ENCODE measurements at regions of chr12 and their contacts with region 1.

Region 1: GRCh38 chr12:11486623-11487444 is 91.5 kb upstream of the PRB2 start:
- DNase-seq: peak; percentile 41
- ATAC-seq: peak; percentile 96
- H3K4me3 Mint-ChIP-seq: no peak overlapping the region
- H3K27ac Mint-ChIP-seq: no peak overlapping the region
- H3K4me1 Mint-ChIP-seq: peaks cover 4% of the 10 kb centered on the region
- H3K27me3 Mint-ChIP-seq: peaks cover 21% of the 10 kb centered on the region
- CTCF ChIP-seq: peak; percentile 94

Region 2: GRCh38 chr12:10153271-10154144 is 1333.3 kb before region 1 on chr12:
- CTCF ChIA-PET with region 1: interaction called, 3 read pairs
- POLR2A ChIA-PET with region 1: no interaction called
- intact Hi-C with region 1: loop called (anchors 5 kb)
- DNase-seq: peak; percentile 39
- ATAC-seq: peak; percentile 80
- H3K4me3 Mint-ChIP-seq: peak overlapping the region; percentile 86
- H3K27ac Mint-ChIP-seq: no peak overlapping the region
- H3K4me1 Mint-ChIP-seq: peaks cover 16% of the 10 kb centered on the region
- H3K27me3 Mint-ChIP-seq: peaks cover 17% of the 10 kb centered on the region
- CTCF ChIP-seq: peak; percentile 71

Region 3: GRCh38 chr12:10562306-10562933 is 924.4 kb before region 1 on chr12:
- CTCF ChIA-PET with region 1: no interaction called
- POLR2A ChIA-PET with region 1: no interaction called
- intact Hi-C with region 1: loop called (anchors 5 kb)
- DNase-seq: no peak
- ATAC-seq: no peak
- H3K4me3 Mint-ChIP-seq: no peak overlapping the region
- H3K27ac Mint-ChIP-seq: no peak overlapping the region
- H3K4me1 Mint-ChIP-seq: no peaks in the 10 kb centered on the region
- H3K27me3 Mint-ChIP-seq: peaks cover 11% of the 10 kb centered on the region
- CTCF ChIP-seq: peak; percentile 87

Region 4: GRCh38 chr12:10771132-10771733 is 715.6 kb before region 1 on chr12:
- CTCF ChIA-PET with region 1: interaction called, 83 read pairs
- POLR2A ChIA-PET with region 1: no interaction called
- intact Hi-C with region 1: loop called (anchors 1 kb)
- DNase-seq: no peak
- ATAC-seq: peak; percentile 54
- H3K4me3 Mint-ChIP-seq: no peak overlapping the region
- H3K27ac Mint-ChIP-seq: no peak overlapping the region
- H3K4me1 Mint-ChIP-seq: no peaks in the 10 kb centered on the region
- H3K27me3 Mint-ChIP-seq: peaks cover 17% of the 10 kb centered on the region
- CTCF ChIP-seq: no peak

Region 5: DNA sequence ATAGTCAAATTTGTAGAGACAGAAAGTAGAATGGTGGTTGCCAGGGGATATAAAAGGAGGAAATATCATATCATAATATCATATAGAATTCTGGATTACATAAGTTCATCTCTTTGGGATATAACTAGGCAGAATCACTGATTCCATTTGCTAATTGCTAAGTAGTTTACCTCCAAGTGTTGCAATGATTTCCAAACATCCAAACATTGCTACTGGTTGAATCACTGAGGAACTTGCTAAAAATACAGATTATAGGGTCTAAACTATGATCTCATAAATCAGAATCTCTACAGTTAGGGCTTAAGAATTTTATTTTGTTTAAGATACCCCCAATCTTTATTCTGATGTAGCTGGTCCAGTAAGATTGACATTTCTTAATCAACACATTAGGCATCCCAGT is 284.0 kb before region 1 on chr12:
- CTCF ChIA-PET with region 1: no interaction called
- POLR2A ChIA-PET with region 1: no interaction called
- intact Hi-C with region 1: loop called (anchors 2 kb)
- DNase-seq: no peak
- ATAC-seq: no peak
- H3K4me3 Mint-ChIP-seq: no peak overlapping the region
- H3K27ac Mint-ChIP-seq: no peak overlapping the region
- H3K4me1 Mint-ChIP-seq: no peaks in the 10 kb centered on the region
- H3K27me3 Mint-ChIP-seq: no peaks in the 10 kb centered on the region
- CTCF ChIP-seq: no peak

Region 6: DNA sequence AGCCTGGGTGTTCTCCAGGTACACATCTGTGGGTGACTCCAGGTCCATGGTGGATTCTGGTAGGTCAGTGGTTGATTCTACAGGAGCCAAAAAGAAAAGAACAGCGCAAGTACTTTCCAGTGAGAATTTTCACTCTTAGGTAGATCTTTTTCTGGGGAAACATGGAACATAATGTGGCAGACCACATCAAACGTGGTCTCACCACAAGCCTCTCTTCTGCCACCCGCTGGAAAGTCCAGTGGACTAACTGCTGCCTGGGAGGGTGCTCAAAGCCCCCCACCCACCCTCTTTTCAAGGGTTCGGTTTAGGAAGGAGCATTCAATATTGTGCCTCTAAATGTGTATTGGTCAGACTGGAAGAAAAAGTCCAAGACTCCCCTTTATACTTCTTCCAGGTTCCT is 55.3 kb before region 1 on chr12:
- CTCF ChIA-PET with region 1: no interaction called
- POLR2A ChIA-PET with region 1: no interaction called
- intact Hi-C with region 1: no loop called
- DNase-seq: no peak
- ATAC-seq: no peak
- H3K4me3 Mint-ChIP-seq: no peak overlapping the region
- H3K27ac Mint-ChIP-seq: no peak overlapping the region
- H3K4me1 Mint-ChIP-seq: no peaks in the 10 kb centered on the region
- H3K27me3 Mint-ChIP-seq: peaks cover 2% of the 10 kb centered on the region
- CTCF ChIP-seq: no peak

Region 7: DNA sequence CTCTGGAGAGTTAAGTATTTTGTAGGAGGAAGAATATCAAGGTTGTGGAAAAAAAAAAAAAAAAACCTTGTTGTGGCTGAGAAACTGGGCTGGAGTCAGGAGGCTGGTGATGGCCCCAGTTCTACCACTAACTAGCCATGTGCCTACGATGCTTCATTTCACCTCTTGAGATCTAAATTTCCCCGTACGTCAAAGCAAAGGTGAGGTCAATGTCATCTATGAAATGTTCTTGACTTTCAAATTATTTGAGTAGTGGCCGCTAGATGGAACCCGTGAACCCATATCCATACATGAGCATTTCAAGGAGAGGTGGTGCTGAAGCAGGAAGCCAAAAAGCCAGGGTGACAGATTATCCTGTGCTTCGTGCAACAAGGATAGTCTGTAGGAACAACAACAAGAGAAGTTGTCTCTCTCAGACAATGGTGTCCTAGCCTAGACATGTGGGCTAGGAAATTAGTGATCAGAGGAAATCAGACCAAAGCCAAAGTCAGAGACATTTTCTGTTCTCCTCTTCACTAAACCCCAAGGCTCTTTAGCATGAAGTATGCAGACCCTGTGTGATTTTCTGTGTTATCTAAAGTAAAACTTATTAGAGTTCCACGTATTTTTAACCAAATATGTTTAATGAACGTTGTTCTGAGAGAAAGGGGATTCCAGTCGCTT is 67.2 kb after region 1 on chr12:
- CTCF ChIA-PET with region 1: no interaction called
- POLR2A ChIA-PET with region 1: no interaction called
- intact Hi-C with region 1: no loop called
- DNase-seq: no peak
- ATAC-seq: peak; percentile 79
- H3K4me3 Mint-ChIP-seq: no peak overlapping the region
- H3K27ac Mint-ChIP-seq: no peak overlapping the region
- H3K4me1 Mint-ChIP-seq: peaks cover 5% of the 10 kb centered on the region
- H3K27me3 Mint-ChIP-seq: peaks cover 5% of the 10 kb centered on the region
- CTCF ChIP-seq: peak; percentile 19

Measured in activated B cell treated with CpG ODN at 0.5 μM for 24 hours (primary cell).